Activated naive CD4-positive, alpha-beta T cell treated with anti-CD3 and anti-CD28 coated beads for 36 hours (primary cell): ENCODE measurements at regions of chr11 and their contacts with region 1.

Region 1: DNA sequence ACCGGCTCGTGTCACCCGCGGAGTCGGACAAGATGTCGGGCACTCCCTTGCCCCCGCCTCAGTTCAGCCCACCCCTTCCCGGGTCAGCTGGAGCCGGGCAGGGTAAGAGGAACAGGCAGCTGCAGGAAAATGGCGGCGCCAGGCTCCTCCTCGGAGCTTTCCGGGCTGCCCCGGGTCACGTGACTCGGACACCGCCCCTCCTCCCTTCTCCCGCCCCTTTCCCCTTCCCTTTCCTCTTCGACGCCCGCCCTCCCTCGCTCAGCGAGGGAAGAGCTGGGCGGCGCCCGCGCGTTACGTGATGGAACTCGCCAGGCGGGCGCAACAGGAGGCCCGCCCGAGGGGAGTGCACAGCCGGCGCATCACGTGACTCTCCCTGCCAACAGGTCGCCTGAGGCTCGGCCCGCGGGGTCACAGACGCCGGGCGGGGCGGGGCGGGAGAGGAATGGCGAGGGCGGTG is at the start of gene PICALM:
- DNase-seq: peak; percentile 99
- H3K4me3 Mint-ChIP-seq: peak within 1 kb of the TSS; percentile 95
- H3K27ac Mint-ChIP-seq: peak within 1 kb of the TSS; percentile 95
- H3K4me1 Mint-ChIP-seq: peaks cover 29% of the 10 kb centered on the region
- H3K27me3 Mint-ChIP-seq: no peaks in the 10 kb centered on the region
- total RNA-seq, gene PICALM: 38.6 to 42.3 TPM

Region 2: GRCh38 chr11:85627998-85628770 is 440.8 kb before region 1 on chr11 and contains the start of gene TMEM126B:
- CTCF ChIA-PET with region 1: no interaction called
- intact Hi-C with region 1: loop called (anchors 1 kb)
- DNase-seq: peak; percentile 98
- H3K4me3 Mint-ChIP-seq: peak within 1 kb of the TSS; percentile 99
- H3K27ac Mint-ChIP-seq: peak within 1 kb of the TSS; percentile 96
- H3K4me1 Mint-ChIP-seq: peaks cover 33% of the 10 kb centered on the region
- H3K27me3 Mint-ChIP-seq: no peaks in the 10 kb centered on the region
- total RNA-seq, gene TMEM126B: 72.6 to 79.0 TPM

Region 3: DNA sequence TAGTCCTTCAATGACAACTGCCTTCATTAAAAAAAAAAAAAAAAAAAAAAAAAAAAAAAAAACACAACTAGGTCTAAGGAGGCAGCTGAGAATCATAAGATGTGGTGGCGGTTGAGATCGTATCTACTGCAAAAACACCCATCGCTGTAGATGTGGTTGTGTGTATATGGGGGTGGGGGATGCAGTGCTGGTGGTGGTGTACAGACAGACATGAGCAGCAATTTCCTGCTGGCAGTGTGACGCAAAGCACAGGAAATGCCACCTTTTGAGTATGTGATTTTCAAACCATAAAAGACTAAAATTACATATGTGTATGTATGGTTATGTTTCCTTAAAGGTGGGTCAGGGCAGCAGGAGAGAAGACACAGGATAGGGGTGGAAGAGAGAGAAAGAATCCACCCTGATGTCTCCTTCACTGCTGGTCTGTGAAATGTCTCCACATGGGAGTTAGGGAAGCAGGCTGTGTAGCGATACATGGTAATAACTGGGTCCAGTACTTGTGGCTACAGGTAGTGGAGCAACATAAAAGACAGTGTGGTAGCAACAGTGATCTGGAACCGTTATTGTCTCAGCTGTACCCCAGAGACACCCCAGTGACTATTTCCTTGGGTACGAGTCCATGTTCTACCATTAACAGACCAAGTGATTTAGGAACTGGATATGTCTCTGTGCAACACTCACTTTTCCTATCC is 315.9 kb before region 1 on chr11:
- CTCF ChIA-PET with region 1: no interaction called
- intact Hi-C with region 1: loop called (anchors 2 kb)
- DNase-seq: peak; percentile 94
- H3K4me3 Mint-ChIP-seq: peak overlapping the region; percentile 57
- H3K27ac Mint-ChIP-seq: peak overlapping the region; percentile 97
- H3K4me1 Mint-ChIP-seq: peaks cover 95% of the 10 kb centered on the region
- H3K27me3 Mint-ChIP-seq: no peaks in the 10 kb centered on the region

Region 4: GRCh38 chr11:86047275-86047991 is 21.5 kb before region 1 on chr11:
- CTCF ChIA-PET with region 1: interaction called, 47 read pairs
- intact Hi-C with region 1: loop called (anchors 1 kb)
- DNase-seq: peak; percentile 69
- H3K4me3 Mint-ChIP-seq: peak overlapping the region; percentile 43
- H3K27ac Mint-ChIP-seq: peak overlapping the region; percentile 93
- H3K4me1 Mint-ChIP-seq: peaks cover 92% of the 10 kb centered on the region
- H3K27me3 Mint-ChIP-seq: no peaks in the 10 kb centered on the region

Region 5: DNA sequence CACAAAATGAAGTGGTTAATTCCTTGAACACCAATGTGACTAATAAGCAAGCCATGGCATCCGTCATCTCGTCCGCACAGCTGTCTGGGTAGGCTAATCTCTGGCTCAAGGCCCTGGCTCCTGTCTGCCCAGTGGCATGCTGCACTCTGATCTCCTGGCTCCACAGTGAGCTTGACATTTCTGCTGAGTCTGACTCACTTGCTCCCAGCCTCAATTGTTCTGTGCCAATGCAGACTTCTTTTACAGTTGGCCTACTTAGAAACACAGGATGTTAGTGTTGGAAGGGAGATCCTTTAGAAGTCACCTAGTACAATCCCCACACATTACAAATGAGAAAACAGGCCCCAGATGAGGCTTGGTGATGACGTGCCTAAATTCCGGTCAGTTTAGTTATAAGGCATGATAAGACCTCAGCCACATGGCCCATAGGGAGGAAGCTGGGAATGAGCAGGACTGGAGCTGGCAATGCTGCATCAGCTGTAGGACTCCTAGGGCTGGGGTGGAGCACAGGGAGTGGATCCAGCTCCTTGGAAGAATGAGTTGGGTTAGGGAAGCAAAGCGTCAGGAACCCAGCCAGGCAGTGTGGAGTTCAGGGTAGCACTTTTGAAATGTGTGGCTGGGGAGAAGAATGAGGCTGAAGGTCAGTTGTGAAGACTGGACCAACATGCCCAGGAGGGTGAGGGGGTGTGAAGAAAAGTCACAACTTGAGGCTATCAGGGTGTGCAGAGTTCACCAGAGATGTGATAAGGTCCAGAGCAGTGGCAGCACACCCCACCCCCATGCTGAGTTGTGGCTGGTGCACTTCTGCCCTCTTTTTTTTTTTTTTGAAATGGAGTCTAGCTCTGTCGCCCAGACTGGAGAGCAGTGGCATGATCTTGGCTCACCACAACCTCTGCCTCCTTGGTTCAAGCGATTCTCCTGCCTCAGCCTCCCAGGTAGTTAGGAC is 105.4 kb after region 1 on chr11:
- CTCF ChIA-PET with region 1: no interaction called
- intact Hi-C with region 1: loop called (anchors 1 kb)
- DNase-seq: no peak
- H3K4me3 Mint-ChIP-seq: no peak overlapping the region
- H3K27ac Mint-ChIP-seq: no peak overlapping the region
- H3K4me1 Mint-ChIP-seq: peaks cover 20% of the 10 kb centered on the region
- H3K27me3 Mint-ChIP-seq: no peaks in the 10 kb centered on the region

Region 6: GRCh38 chr11:86218125-86219084 is 149.4 kb after region 1 on chr11:
- CTCF ChIA-PET with region 1: no interaction called
- intact Hi-C with region 1: loop called (anchors 1 kb)
- DNase-seq: peak; percentile 80
- H3K4me3 Mint-ChIP-seq: peak overlapping the region; percentile 14
- H3K27ac Mint-ChIP-seq: peak overlapping the region; percentile 90
- H3K4me1 Mint-ChIP-seq: peaks cover 82% of the 10 kb centered on the region
- H3K27me3 Mint-ChIP-seq: peaks cover 3% of the 10 kb centered on the region

Region 7: GRCh38 chr11:86802601-86803051 is 733.6 kb after region 1 on chr11:
- CTCF ChIA-PET with region 1: no interaction called
- intact Hi-C with region 1: loop called (anchors 5 kb)
- DNase-seq: peak; percentile 38
- H3K4me3 Mint-ChIP-seq: no peak overlapping the region
- H3K27ac Mint-ChIP-seq: no peak overlapping the region
- H3K4me1 Mint-ChIP-seq: peaks cover 53% of the 10 kb centered on the region
- H3K27me3 Mint-ChIP-seq: peaks cover 46% of the 10 kb centered on the region